Sigmoid colon (tissue), 7 donors: ENCODE measurements at regions of chr9 and their contacts with region 1.

Region 1: GRCh38 chr9:893843-894420 is 52.4 kb downstream of the DMRT1 start:
- DNase-seq: no peak
- H3K4me3 ChIP-seq: no peak overlapping the region
- H3K27ac ChIP-seq: no peak overlapping the region
- H3K4me1 ChIP-seq: no peaks in the 10 kb centered on the region
- H3K27me3 ChIP-seq: peaks cover 0 to 15% (median 5%) of the 10 kb centered on the region in 3 donors
- CTCF ChIP-seq: peak in 3 of 4 experiments; percentile 47 to 62 (median 50)
- EP300 ChIP-seq: no peak
- POLR2A ChIP-seq: no peak

Region 2: GRCh38 chr9:613771-614347 is 280.1 kb before region 1 on chr9:
- intact Hi-C with region 1: no loop called
- DNase-seq: peak; percentile 92
- H3K4me3 ChIP-seq: no peak overlapping the region
- H3K27ac ChIP-seq: peak overlapping the region; percentile 61 to 79 (median 72)
- H3K4me1 ChIP-seq: peaks cover 0 to 46% (median 34%) of the 10 kb centered on the region in 4 donors
- H3K27me3 ChIP-seq: no peaks in the 10 kb centered on the region
- CTCF ChIP-seq: peak; percentile 86 to 96 (median 90)
- EP300 ChIP-seq: no peak
- POLR2A ChIP-seq: no peak

Region 3: GRCh38 chr9:1009101-1009707 is 115.3 kb after region 1 on chr9:
- intact Hi-C with region 1: loop called (anchors 10 kb)
- DNase-seq: peak; percentile 87
- H3K4me3 ChIP-seq: no peak overlapping the region
- H3K27ac ChIP-seq: no peak overlapping the region
- H3K4me1 ChIP-seq: peaks cover 0 to 6% (median 0%) of the 10 kb centered on the region in 4 donors
- H3K27me3 ChIP-seq: peaks cover 0 to 29% (median 0%) of the 10 kb centered on the region in 3 donors
- CTCF ChIP-seq: peak; percentile 69 to 96 (median 86)
- EP300 ChIP-seq: no peak
- POLR2A ChIP-seq: no peak